ENCODE measurements at regions of chr14 and their contacts with region 1.

Region 1: DNA sequence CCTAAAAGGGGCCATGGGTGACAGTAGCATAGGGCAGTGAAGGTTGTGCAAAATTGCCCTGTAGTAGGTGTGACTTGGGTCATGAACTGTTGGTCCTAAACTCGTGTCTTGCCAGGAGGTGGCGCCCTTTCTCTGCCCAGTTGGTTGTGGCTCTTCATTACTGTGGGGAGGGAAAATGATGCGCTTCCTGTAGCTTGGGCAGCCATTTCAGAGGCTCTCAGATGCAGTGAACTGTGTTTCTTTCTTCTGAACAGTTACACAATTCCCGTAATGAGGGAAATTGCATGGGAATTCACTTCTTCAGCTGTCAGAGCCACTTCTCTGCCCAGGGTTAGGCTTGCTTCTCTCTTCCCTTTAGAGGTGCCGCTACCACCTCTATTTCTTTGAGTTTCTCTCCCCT is 148.1 kb upstream of the NRXN3 start:
- DNase-seq: peak; percentile 71
- ATAC-seq: peak; percentile 66 to 71
- H3K4me3 ChIP-seq: no peak overlapping the region
- H3K27ac ChIP-seq: no peak overlapping the region
- H3K4me1 ChIP-seq: no peaks in the 10 kb centered on the region
- H3K27me3 ChIP-seq: no peaks in the 10 kb centered on the region
- CTCF ChIP-seq: peak; percentile 57

Region 2: GRCh38 chr14:78566026-78566858 is 544.2 kb after region 1 on chr14:
- intact Hi-C with region 1: loop called (anchors 10 kb)
- DNase-seq: peak; percentile 63
- ATAC-seq: peak; percentile 92 to 93
- H3K4me3 ChIP-seq: peak overlapping the region; percentile 38
- H3K27ac ChIP-seq: no peak overlapping the region
- H3K4me1 ChIP-seq: peaks cover 7% of the 10 kb centered on the region
- H3K27me3 ChIP-seq: no peaks in the 10 kb centered on the region
- CTCF ChIP-seq: peak; percentile 75

Measured in lower lobe of right lung (tissue), 2 donors.